Activated CD4-positive, alpha-beta T cell treated with anti-CD3 and anti-CD28 coated beads for 36 hours (primary cell): ENCODE measurements at regions of chr12 and their contacts with region 1.

Region 1: GRCh38 chr12:89709157-89709994 is 738 bp upstream of the ATP2B1 start:
- DNase-seq: peak; percentile 99
- ATAC-seq: peak; percentile 81
- H3K4me3 Mint-ChIP-seq: peak overlapping the region; percentile 79
- H3K27ac Mint-ChIP-seq: peak overlapping the region; percentile 84
- H3K4me1 Mint-ChIP-seq: peaks cover 30% of the 10 kb centered on the region
- H3K27me3 Mint-ChIP-seq: no peaks in the 10 kb centered on the region

Region 2: DNA sequence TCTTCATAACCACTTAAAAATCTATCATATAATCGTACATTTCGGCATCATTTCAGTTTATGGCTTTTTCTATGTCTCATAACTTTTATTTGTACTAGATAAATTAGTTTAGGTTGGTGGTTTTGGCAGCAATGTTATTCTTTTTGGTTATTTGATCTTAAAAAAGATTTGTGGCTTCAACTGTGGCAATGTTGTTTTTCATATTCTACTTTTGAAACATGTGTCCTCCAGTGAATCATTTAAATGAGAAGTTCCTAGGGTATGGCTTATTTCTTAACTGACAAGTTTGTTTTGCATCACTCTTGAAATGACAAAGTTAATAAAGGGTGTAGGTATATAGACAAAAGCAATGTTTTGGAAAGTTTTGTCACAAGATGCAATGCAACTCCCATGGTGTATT is 1118.0 kb before region 1 on chr12:
- CTCF ChIA-PET with region 1: no interaction called
- POLR2A ChIA-PET with region 1: no interaction called
- intact Hi-C with region 1: no loop called
- DNase-seq: no peak
- ATAC-seq: no peak
- H3K4me3 Mint-ChIP-seq: no peak overlapping the region
- H3K27ac Mint-ChIP-seq: no peak overlapping the region
- H3K4me1 Mint-ChIP-seq: no peaks in the 10 kb centered on the region
- H3K27me3 Mint-ChIP-seq: no peaks in the 10 kb centered on the region

Region 3: DNA sequence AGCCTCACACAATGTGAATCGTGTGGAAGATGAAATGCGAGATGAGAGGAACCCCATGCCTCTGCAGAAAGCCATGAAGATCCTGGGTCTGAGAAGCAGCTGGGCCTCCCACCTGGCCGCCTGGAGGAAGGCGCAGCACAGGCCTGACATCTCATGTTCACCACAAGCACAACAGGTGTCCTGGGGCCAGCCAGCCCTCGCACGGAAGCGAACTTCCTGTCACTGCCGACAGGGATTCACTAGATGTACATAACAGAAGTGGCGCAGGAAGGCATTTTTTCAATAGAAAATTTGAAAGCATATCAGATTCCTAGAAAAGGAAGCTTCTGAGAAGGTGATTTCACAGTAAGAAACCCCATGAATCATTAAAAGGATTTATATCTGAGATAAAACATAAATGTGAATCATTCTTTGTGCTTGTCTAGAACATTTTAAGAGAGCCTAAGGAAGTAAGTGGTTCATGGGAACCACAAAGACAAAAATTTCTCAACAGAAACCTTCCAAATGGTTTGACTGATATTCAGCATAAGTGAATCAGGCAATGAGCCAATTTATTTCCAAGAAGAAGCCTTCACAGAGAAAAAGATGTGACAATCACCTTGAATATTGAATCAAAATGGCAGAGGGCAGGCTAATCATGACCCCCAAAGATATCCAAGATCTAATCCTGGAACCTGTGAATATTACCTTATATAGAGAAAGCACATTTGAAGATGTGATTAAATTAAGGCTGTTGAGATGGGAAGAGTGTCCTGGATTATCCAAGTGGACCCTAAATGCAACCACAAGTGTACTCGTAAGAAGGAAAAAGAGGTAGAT is 669.0 kb before region 1 on chr12:
- CTCF ChIA-PET with region 1: no interaction called
- POLR2A ChIA-PET with region 1: no interaction called
- intact Hi-C with region 1: loop called in 1 of 2 experiments (anchors 1 kb)
- DNase-seq: peak; percentile 92
- ATAC-seq: peak; percentile 78
- H3K4me3 Mint-ChIP-seq: peak overlapping the region; percentile 40
- H3K27ac Mint-ChIP-seq: peak overlapping the region; percentile 99
- H3K4me1 Mint-ChIP-seq: peaks cover 54% of the 10 kb centered on the region
- H3K27me3 Mint-ChIP-seq: no peaks in the 10 kb centered on the region

Region 4: GRCh38 chr12:89524541-89525285 is 184.7 kb before region 1 on chr12 and contains the start of gene GALNT4:
- CTCF ChIA-PET with region 1: no interaction called
- POLR2A ChIA-PET with region 1: interaction called, 4 read pairs
- intact Hi-C with region 1: loop called in 1 of 2 experiments (anchors 1 kb)
- DNase-seq: peak; percentile 84
- ATAC-seq: peak; percentile 64
- H3K4me3 Mint-ChIP-seq: peak within 1 kb of the TSS; percentile 81
- H3K27ac Mint-ChIP-seq: peak within 1 kb of the TSS; percentile 94
- H3K4me1 Mint-ChIP-seq: peaks cover 53% of the 10 kb centered on the region
- H3K27me3 Mint-ChIP-seq: no peaks in the 10 kb centered on the region
- total RNA-seq, gene GALNT4: 3.0 to 4.6 TPM

Region 5: GRCh38 chr12:89663577-89664357 is 45.6 kb before region 1 on chr12:
- CTCF ChIA-PET with region 1: interaction called, 4 read pairs
- POLR2A ChIA-PET with region 1: interaction called, 4 read pairs
- intact Hi-C with region 1: loop called (anchors 1 to 2 kb)
- DNase-seq: peak; percentile 32
- ATAC-seq: peak; percentile 90
- H3K4me3 Mint-ChIP-seq: peak overlapping the region; percentile 30
- H3K27ac Mint-ChIP-seq: peak overlapping the region; percentile 69
- H3K4me1 Mint-ChIP-seq: peaks cover 72% of the 10 kb centered on the region
- H3K27me3 Mint-ChIP-seq: no peaks in the 10 kb centered on the region

Region 6: GRCh38 chr12:89882050-89882449 is 172.7 kb after region 1 on chr12:
- CTCF ChIA-PET with region 1: interaction called, 4 read pairs
- POLR2A ChIA-PET with region 1: no interaction called
- intact Hi-C with region 1: loop called in 1 of 2 experiments (anchors 1 kb)
- DNase-seq: peak; percentile 45
- ATAC-seq: peak; percentile 67
- H3K4me3 Mint-ChIP-seq: no peak overlapping the region
- H3K27ac Mint-ChIP-seq: peak overlapping the region; percentile 83
- H3K4me1 Mint-ChIP-seq: peaks cover 38% of the 10 kb centered on the region
- H3K27me3 Mint-ChIP-seq: no peaks in the 10 kb centered on the region

Region 7: DNA sequence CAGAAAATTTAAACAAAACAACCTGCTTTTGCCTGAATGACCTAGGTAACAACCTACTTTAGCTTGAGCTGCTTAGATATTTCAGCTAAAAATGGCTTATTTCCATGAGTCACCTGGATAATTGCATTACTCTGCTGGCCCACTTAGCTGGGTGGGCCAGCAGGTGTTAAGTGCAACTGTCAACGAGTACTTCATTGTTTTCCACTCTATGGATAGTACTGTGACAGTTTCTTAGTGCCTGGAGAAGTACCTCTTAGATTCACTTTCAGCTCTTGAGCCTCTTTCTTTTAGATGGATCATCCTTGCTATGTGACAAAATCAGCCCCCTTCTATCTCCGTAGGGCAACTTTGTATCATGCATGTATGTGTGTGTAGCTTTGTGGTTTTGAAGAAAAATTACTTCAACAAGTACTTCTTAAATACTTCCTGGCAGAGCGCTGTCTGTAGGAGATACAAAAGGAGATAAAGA is 367.5 kb after region 1 on chr12:
- CTCF ChIA-PET with region 1: no interaction called
- POLR2A ChIA-PET with region 1: no interaction called
- intact Hi-C with region 1: no loop called
- DNase-seq: no peak
- ATAC-seq: peak; percentile 72
- H3K4me3 Mint-ChIP-seq: no peak overlapping the region
- H3K27ac Mint-ChIP-seq: no peak overlapping the region
- H3K4me1 Mint-ChIP-seq: peaks cover 29% of the 10 kb centered on the region
- H3K27me3 Mint-ChIP-seq: no peaks in the 10 kb centered on the region

Region 8: GRCh38 chr12:90102957-90103652 is 393.7 kb after region 1 on chr12:
- CTCF ChIA-PET with region 1: no interaction called
- POLR2A ChIA-PET with region 1: no interaction called
- intact Hi-C with region 1: loop called (anchors 2 to 5 kb)
- DNase-seq: peak; percentile 19
- ATAC-seq: peak; percentile 73
- H3K4me3 Mint-ChIP-seq: no peak overlapping the region
- H3K27ac Mint-ChIP-seq: no peak overlapping the region
- H3K4me1 Mint-ChIP-seq: peaks cover 15% of the 10 kb centered on the region
- H3K27me3 Mint-ChIP-seq: peaks cover 2% of the 10 kb centered on the region